ENCODE measurements at regions of chr7 and their contacts with region 1.

Region 1: GRCh38 chr7:85567983-85568382 is 381.1 kb upstream of the SEMA3D start:
- DNase-seq: no peak
- H3K4me3 ChIP-seq: no peak overlapping the region
- H3K27ac ChIP-seq: no peak overlapping the region
- H3K27me3 ChIP-seq: no peaks in the 10 kb centered on the region
- CTCF ChIP-seq: no peak

Region 2: GRCh38 chr7:85535974-85536729 is 31.8 kb before region 1 on chr7:
- CTCF ChIA-PET with region 1: interaction called, 13 read pairs
- POLR2A ChIA-PET with region 1: no interaction called
- DNase-seq: no peak
- H3K4me3 ChIP-seq: no peak overlapping the region
- H3K27ac ChIP-seq: no peak overlapping the region
- H3K27me3 ChIP-seq: no peaks in the 10 kb centered on the region
- CTCF ChIP-seq: no peak